Endothelial cell of umbilical vein (primary cell): ENCODE measurements at regions of chr6 and their contacts with region 1.

Region 1: GRCh38 chr6:152552616-152553209 is 84.4 kb downstream of the SYNE1 start:
- DNase-seq: peak; percentile 88
- H3K4me3 ChIP-seq: no peak overlapping the region
- H3K27ac ChIP-seq: no peak overlapping the region
- H3K4me1 ChIP-seq: no peaks in the 10 kb centered on the region
- H3K27me3 ChIP-seq: no peaks in the 10 kb centered on the region
- CTCF ChIP-seq: peak; percentile 78 to 83
- POLR2A ChIP-seq: no peak

Region 2: GRCh38 chr6:152572395-152573061 is 19.8 kb after region 1 on chr6:
- CTCF ChIA-PET with region 1: interaction called, 14 read pairs
- POLR2A ChIA-PET with region 1: no interaction called
- dilution Hi-C with region 1: no loop called
- intact Hi-C with region 1: no loop called
- DNase-seq: peak; percentile 78
- H3K4me3 ChIP-seq: no peak overlapping the region
- H3K27ac ChIP-seq: no peak overlapping the region
- H3K4me1 ChIP-seq: peaks cover 19% of the 10 kb centered on the region
- H3K27me3 ChIP-seq: peaks cover 0 to 12% of the 10 kb centered on the region in 2 experiments
- CTCF ChIP-seq: no peak
- POLR2A ChIP-seq: no peak

Region 3: DNA sequence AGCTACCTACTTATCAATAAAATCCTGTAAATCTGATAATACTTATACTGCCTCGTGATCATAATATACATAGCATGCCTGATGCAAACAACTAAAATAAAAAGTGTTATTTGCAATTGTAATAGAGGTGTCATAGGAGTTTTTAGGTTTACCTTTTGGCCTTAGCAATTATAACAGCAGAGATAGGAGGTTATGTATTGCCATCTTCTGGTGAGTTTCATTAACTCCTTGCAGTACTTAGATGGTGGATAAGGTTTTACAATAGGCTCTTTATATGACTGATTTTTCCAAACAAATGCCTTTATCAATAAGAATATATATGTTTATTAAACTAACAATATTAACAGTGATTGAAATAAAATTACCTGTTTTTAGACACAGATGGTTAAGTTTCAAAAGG is 117.2 kb after region 1 on chr6:
- CTCF ChIA-PET with region 1: interaction called, 71 read pairs
- POLR2A ChIA-PET with region 1: no interaction called
- dilution Hi-C with region 1: no loop called
- intact Hi-C with region 1: loop called (anchors 1 kb)
- DNase-seq: peak; percentile 67
- H3K4me3 ChIP-seq: no peak overlapping the region
- H3K27ac ChIP-seq: no peak overlapping the region
- H3K4me1 ChIP-seq: peaks cover 44% of the 10 kb centered on the region
- H3K27me3 ChIP-seq: no peaks in the 10 kb centered on the region
- CTCF ChIP-seq: peak; percentile 8 to 22
- POLR2A ChIP-seq: no peak

Region 4: GRCh38 chr6:152736687-152737273 is 184.1 kb after region 1 on chr6:
- CTCF ChIA-PET with region 1: no interaction called
- POLR2A ChIA-PET with region 1: no interaction called
- dilution Hi-C with region 1: no loop called
- intact Hi-C with region 1: loop called (anchors 5 kb)
- DNase-seq: no peak
- H3K4me3 ChIP-seq: no peak overlapping the region
- H3K27ac ChIP-seq: no peak overlapping the region
- H3K4me1 ChIP-seq: no peaks in the 10 kb centered on the region
- H3K27me3 ChIP-seq: no peaks in the 10 kb centered on the region
- CTCF ChIP-seq: no peak
- POLR2A ChIP-seq: no peak

Region 5: DNA sequence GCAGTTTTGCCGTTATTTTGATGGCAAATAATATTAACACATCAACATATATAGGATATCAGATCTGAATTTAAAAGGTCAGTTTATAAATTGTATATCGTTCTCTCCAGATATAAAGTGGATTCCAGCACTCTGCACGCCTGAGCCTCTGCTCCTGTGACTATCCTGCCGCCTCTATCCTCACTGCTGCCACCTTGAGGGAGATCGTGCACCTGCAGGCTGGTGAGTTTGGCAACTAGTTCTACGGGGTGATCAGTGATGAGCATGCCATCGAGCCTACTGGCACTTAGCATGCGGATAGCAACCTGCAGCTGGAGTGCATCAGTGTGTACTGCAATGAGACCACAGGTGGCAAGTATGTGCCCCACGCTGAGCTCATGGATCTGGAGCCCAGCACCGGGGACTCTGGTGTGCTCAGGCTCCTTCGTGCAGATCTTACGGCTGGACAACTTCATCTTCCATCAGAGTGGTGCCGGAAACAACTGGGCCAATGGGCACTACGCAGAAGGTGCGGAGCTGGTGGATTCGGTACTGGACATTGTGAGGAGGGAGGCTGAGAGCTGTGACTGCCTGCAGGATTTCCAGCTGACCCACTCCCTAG is 345.2 kb after region 1 on chr6:
- CTCF ChIA-PET with region 1: no interaction called
- POLR2A ChIA-PET with region 1: no interaction called
- dilution Hi-C with region 1: no loop called
- intact Hi-C with region 1: loop called (anchors 1 kb)
- DNase-seq: peak; percentile 65
- H3K4me3 ChIP-seq: no peak overlapping the region
- H3K27ac ChIP-seq: no peak overlapping the region
- H3K4me1 ChIP-seq: no peaks in the 10 kb centered on the region
- H3K27me3 ChIP-seq: peaks cover 0 to 2% of the 10 kb centered on the region in 2 experiments
- CTCF ChIP-seq: peak; percentile 84 to 88
- POLR2A ChIP-seq: no peak

Region 6: GRCh38 chr6:153023977-153024708 is 471.4 kb after region 1 on chr6:
- CTCF ChIA-PET with region 1: no interaction called
- POLR2A ChIA-PET with region 1: no interaction called
- dilution Hi-C with region 1: no loop called
- intact Hi-C with region 1: loop called (anchors 5 kb)
- DNase-seq: peak; percentile 77
- H3K4me3 ChIP-seq: no peak overlapping the region
- H3K27ac ChIP-seq: no peak overlapping the region
- H3K4me1 ChIP-seq: no peaks in the 10 kb centered on the region
- H3K27me3 ChIP-seq: no peaks in the 10 kb centered on the region
- CTCF ChIP-seq: peak; percentile 67 to 76
- POLR2A ChIP-seq: no peak